ENCODE measurements at regions of chr7 and their contacts with region 1.

Region 1: DNA sequence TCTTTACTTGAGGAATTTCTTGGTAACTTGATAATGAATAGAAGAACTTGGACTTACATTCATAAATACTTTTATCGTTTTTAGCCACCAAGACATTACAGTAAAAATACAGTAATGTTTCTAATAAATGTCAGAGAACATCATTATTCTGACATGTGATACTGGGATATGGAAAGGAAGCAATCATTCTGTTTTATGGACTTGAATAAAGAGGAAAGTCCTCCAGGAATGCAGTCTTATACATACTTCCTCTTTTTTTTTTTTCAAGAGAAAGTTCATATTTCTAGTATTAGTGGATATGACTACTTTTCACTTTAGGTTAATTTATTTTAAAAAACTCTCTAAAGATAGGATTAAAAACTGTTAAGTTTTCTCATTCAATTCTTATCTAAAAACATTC is 220.0 kb upstream of the SEMA3C start:
- DNase-seq: no peak
- ATAC-seq: no peak
- H3K4me3 ChIP-seq: no peak overlapping the region
- H3K27ac ChIP-seq: no peak overlapping the region
- H3K4me1 ChIP-seq: no peaks in the 10 kb centered on the region; the same call in 1 of the 2 replicates
- H3K27me3 ChIP-seq: no peaks in the 10 kb centered on the region; the same call in 1 of the 2 replicates
- CTCF ChIP-seq: no peak
- POLR2A ChIP-seq: no peak
- RAD21 ChIP-seq: no peak

Region 2: GRCh38 chr7:80654887-80655340 is 484.0 kb before region 1 on chr7:
- CTCF ChIA-PET with region 1: no interaction called
- POLR2A ChIA-PET with region 1: no interaction called
- dilution Hi-C with region 1: no loop called
- in situ Hi-C with region 1: no loop called
- intact Hi-C with region 1: no loop called
- DNase-seq: no peak
- ATAC-seq: no peak
- H3K4me3 ChIP-seq: no peak overlapping the region
- H3K27ac ChIP-seq: no peak overlapping the region
- H3K4me1 ChIP-seq: peaks cover 2% of the 10 kb centered on the region
- H3K27me3 ChIP-seq: no peaks in the 10 kb centered on the region
- CTCF ChIP-seq: no peak
- POLR2A ChIP-seq: no peak
- RAD21 ChIP-seq: no peak

Region 3: GRCh38 chr7:81190997-81191768 is 52.3 kb after region 1 on chr7:
- CTCF ChIA-PET with region 1: no interaction called
- POLR2A ChIA-PET with region 1: no interaction called
- dilution Hi-C with region 1: no loop called
- in situ Hi-C with region 1: no loop called
- intact Hi-C with region 1: loop called (anchors 10 kb)
- DNase-seq: peak; percentile 56
- ATAC-seq: peak; percentile 77
- H3K4me3 ChIP-seq: no peak overlapping the region
- H3K27ac ChIP-seq: no peak overlapping the region
- H3K4me1 ChIP-seq: peaks cover 8% of the 10 kb centered on the region
- H3K27me3 ChIP-seq: no peaks in the 10 kb centered on the region
- CTCF ChIP-seq: no peak
- POLR2A ChIP-seq: no peak
- RAD21 ChIP-seq: no peak